ENCODE measurements at regions of chr15 and their contacts with region 1.

Region 1: DNA sequence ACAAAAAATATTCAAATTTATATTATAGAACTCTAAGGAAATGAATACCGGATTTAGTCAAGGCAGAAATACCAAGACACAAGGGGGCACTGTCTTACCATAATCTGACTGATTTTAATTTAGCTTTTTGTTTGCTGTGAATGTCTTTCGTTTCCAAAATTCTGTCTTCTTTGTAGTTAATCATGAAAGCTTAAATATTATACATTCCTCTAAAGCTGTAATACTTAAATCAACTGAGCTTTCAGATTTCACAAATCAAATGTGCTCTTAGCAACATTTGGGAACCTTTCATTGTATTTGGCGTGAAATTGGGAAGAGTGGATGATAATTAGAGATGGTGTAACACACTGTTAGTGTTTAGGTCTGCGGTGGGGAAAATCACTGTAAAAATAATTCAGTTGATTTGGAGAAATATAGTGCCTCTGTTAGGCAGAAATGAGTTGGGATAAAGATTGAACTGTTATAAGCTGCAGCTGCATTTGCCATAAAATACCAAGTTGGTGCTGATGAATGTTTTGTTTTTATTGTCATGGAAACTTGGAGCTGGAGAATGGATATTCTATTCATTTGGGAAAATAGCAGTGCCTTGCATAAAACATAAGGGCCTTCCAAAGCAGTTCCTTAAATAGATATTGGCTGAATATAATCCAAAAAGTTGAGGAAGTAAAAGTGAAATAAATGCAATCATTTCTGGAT is 228.2 kb downstream of the TCF12 start:
- DNase-seq: no peak
- H3K4me3 ChIP-seq: peak overlapping the region; percentile 18 to 36
- H3K27ac ChIP-seq: peak overlapping the region; percentile 12 to 28
- H3K4me1 ChIP-seq: peaks cover 7 to 28% of the 10 kb centered on the region in 2 donors
- H3K27me3 ChIP-seq: no peaks in the 10 kb centered on the region
- CTCF ChIP-seq: peak; percentile 51 to 69 (median 57)

Region 2: DNA sequence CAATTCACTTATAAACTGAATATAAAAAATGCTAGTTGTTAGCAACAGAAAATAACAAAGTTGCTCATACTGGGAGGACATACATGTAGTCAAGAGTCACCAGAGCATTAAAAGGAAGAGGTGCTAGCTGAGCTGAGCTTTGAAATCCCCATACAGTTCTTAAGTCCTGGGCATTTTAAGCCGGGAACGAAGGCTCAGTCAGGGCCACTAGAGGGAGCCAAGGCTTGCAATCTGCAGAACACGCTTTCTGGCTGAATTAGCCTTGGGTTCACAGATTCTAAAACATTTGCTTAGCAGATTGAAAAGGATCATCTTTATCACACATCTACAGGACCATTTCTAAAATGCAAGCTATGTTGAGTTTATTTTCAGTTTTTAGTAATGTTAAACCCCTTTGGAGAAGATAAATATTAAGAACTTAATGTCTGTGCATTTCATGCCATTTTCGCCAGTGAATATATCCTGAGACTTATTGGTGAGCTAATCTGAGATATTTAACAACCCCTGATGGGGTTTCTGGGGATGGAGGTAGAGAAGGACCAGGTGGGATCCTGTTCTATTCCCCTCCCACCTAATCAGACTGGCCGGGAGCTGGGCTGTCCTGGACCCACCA is 655.4 kb before region 1 on chr15:
- intact Hi-C with region 1: loop called (anchors 10 kb)
- DNase-seq: peak in 1 of 2 donors; percentile 73
- H3K4me3 ChIP-seq: no peak overlapping the region
- H3K27ac ChIP-seq: no peak overlapping the region
- H3K4me1 ChIP-seq: no peaks in the 10 kb centered on the region
- H3K27me3 ChIP-seq: no peaks in the 10 kb centered on the region
- CTCF ChIP-seq: peak; percentile 27 to 81 (median 67)

Region 3: DNA sequence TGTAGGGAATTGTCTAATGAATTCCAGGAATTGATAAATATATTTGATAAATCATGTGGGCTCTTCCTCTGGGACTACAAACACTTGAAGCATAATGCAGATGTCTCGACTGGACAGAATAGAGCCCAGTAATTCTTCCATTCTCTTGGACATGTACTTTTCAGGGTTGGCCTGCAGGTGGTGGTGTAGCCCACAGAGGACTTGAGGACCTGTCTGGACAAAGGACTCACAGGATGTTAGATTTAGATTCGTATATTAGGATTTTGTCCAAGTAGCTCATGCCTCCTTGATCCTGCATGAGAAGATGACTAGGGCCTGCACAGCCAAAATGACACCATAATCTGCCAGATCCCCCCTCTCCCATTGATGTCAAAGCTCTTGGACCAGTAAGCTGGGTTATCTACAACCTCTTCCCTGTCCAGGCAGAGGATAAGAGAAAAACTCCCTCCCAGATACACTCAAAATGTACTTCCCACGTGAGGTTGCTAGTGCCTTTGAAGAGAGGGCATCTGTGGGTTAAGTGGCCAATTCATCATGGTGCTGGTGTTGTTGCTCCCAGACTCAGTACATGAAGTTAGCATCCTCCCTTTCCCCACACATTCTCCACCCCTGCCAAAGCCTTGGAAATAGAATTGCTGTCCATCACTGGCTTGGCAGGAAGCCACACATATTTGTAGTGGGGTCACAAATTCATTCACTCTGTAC is 324.8 kb before region 1 on chr15:
- intact Hi-C with region 1: loop called (anchors 5 kb)
- DNase-seq: no peak
- H3K4me3 ChIP-seq: no peak overlapping the region
- H3K27ac ChIP-seq: no peak overlapping the region
- H3K4me1 ChIP-seq: peaks cover 0 to 4% of the 10 kb centered on the region in 2 donors
- H3K27me3 ChIP-seq: no peaks in the 10 kb centered on the region
- CTCF ChIP-seq: peak; percentile 41 to 62 (median 41)

Region 4: DNA sequence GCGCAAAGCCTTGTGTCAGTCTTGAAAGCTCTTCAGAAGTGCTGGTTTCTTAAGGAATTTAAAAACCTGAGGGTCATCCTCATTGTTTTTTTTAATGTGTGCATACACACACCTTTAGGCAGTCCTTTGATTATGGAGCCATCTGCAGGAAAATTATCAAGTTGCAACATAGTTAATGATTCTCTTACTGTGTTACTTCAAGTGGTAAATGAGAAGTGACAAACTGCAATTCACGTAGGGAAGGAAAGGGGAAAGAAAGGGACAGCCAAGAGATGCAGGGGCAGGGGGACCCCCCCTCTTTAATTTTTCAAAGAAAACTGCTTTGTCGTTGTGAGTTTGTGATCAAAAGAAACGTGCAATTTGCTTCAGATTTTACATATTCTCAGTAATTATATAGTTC is 67.2 kb after region 1 on chr15:
- intact Hi-C with region 1: loop called (anchors 5 kb)
- DNase-seq: no peak
- H3K4me3 ChIP-seq: no peak overlapping the region
- H3K27ac ChIP-seq: no peak overlapping the region
- H3K4me1 ChIP-seq: peaks cover 0 to 11% of the 10 kb centered on the region in 2 donors
- H3K27me3 ChIP-seq: no peaks in the 10 kb centered on the region
- CTCF ChIP-seq: peak in 2 of 3 experiments; percentile 38 to 49

Region 5: DNA sequence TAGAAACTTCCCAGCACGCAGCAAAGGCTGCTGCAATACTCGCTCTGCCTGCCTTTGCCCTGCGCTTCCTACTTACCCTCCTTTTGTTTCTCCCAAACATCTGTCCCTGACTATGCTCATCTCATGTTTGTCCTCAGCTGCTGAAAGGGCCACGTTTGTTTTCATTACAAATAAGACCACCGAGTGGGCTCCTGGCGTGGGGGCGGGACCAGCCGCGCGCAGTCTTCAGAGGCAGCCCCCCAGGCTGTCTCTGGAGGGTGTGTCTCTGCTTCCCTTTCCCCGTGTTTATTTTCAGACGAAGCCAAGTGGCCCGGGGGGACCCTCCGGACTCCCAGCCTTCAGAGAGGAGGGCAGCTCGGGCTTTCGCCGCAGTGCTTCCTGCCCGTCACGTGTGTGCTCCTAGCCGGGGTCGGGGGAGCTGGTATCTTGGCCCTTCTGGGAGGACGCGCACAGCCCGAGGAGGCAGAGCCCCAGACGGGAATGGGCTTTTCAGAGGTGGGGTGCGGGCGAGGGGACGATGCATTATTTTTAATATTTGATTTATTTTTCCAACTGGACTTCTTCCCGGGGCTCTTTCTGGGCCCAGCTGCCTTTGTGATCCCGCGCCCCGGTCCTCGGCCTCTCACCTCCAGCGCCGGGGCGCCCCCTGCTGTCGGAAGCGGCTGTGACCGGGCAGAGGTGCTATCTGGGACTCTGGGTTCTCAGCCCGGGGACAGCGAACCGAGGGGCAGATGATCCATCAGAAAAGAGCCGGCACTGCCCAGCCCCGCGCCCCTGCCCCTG is 159.7 kb after region 1 on chr15:
- intact Hi-C with region 1: loop called (anchors 1 kb)
- DNase-seq: peak; percentile 29 to 91
- H3K4me3 ChIP-seq: peak overlapping the region; percentile 48 to 71
- H3K27ac ChIP-seq: no peak overlapping the region
- H3K4me1 ChIP-seq: peaks cover 0 to 9% of the 10 kb centered on the region in 2 donors
- H3K27me3 ChIP-seq: no peaks in the 10 kb centered on the region
- CTCF ChIP-seq: peak; percentile 86 to 96 (median 88)

Region 6: DNA sequence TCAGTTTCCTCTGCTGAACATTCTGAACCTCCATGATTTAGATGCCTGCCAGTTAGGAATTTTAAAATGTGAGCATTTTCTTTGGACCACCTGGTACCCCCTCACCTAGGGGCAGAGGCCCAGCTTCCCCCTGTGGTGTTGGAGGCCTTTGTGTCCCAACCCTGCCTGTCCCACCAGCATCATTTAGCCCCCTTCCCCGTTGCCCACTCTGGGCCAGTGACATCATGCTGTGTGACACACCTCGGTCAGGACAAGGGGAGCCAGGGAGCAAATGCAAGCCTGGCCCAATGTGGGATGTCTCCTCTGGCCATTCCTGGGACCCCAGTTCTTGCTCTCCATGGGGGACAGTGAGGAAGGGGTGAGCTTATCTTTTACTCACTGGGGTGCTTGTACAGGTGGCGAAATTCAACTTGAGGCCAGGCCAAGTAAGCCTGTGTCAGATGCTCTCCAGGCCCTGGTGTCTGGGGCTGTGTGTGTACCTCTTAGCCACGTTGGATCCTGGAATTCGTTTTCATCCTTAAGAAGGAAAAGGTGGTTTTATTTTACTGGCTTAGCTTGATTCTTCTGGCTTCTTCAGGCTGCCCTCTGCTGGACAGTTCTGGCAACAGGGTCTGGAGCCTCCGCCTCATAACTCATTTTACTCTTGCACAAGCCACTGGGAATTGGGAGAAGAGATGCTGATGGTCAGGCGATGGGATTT is 395.3 kb after region 1 on chr15:
- intact Hi-C with region 1: loop called (anchors 5 kb)
- DNase-seq: peak in 1 of 2 donors; percentile 84
- H3K4me3 ChIP-seq: no peak overlapping the region
- H3K27ac ChIP-seq: no peak overlapping the region
- H3K4me1 ChIP-seq: peaks cover 4 to 10% of the 10 kb centered on the region in 2 donors
- H3K27me3 ChIP-seq: no peaks in the 10 kb centered on the region
- CTCF ChIP-seq: peak; percentile 48 to 86 (median 65)

Measured in ascending aorta (tissue), 2 donors.